ENCODE measurements at regions of chr1 and their contacts with region 1.

Region 1: GRCh38 chr1:29235955-29236684 is at the start of gene PTPRU:
- DNase-seq: peak; percentile 89
- ATAC-seq: peak; percentile 84
- total RNA-seq, gene PTPRU: 22.1 TPM

Region 2: GRCh38 chr1:29383746-29384371 is 147.7 kb after region 1 on chr1:
- intact Hi-C with region 1: no loop called
- DNase-seq: no peak
- ATAC-seq: no peak

Region 3: GRCh38 chr1:30101477-30102227 is 865.5 kb after region 1 on chr1:
- intact Hi-C with region 1: loop called (anchors 5 kb)
- DNase-seq: no peak
- ATAC-seq: no peak

Region 4: DNA sequence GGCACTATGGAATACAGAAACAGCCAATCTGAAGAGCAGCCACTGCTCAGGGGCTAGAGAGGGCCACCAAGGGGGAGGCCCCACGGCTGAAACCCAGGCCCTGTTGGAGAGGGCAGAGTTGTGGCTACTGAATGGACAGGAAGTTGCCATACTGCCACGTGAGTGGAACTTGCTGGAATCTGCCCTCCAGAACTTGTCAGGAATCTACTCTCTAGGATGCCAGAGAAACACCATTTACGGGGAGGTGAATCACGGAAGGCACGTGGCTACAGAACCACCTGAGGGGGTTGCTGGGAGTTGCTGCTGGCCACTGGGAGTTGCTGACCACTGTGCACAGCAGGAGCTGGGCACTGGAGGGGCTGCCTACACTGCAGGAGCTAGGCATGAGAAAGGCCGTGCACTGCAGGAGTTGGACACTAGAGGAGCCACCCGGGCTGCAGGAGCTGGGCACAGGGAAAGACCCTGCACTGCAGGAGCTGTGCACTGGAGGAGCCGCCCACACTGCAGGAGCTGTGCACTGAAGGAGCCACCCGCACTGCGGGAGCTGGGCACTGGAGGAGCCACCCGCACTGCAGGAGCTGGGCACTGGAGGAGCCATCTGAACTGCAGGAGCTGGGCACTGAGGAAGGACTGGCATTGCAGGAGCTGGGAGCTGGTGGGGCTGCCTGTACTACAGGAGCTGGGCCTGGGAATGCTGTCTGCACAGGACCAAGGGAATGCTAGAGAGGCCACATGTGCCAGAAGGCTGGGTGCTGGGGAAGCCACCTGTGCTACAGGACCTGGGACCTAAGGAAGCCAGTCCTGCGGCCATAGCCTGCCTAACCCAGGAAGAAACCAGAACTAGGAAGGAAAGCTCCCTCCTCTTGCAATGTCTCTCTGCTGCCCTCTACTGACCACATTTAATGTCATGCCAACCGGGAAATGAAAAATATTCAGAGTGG is 1143.8 kb after region 1 on chr1:
- intact Hi-C with region 1: loop called (anchors 5 kb)
- DNase-seq: no peak
- ATAC-seq: peak; percentile 85